ENCODE measurements at regions of chr13 and their contacts with region 1.

Region 1: DNA sequence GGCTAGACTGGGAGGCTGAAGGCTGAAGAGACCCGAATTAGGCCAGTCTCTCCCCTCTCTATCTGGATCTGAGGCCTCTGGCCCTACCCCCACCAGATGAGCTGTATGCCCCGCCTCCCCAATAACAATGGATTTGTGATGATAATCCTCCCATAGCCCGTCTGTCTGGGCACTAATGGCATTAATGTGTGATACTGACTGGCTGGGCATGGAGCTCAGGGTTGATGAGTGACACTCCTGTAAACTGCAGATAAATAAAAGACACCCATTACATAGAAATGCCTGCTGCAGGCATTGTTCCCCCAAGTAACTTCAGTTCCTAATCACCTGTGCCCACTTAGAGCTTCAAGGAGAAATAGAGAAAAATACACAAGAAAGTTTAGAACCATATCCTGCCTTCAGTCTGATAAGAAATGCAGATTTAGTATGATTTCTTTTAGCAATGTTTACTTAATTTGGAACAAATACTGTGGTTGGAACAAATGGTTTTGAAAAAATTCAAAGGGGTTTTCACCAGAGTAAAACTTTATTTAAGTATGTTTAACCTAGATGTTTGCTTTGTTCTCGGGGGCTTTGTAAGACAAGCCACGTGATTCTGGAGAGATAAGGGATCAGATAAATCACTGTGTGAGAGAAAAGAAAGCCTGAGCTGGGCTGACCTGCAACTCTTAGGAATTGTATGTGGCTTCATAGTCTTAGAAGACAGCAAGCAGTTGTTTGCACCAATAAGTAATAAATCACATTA is 60.3 kb downstream of the TNFRSF19 start:
- DNase-seq: peak; percentile 86
- ATAC-seq: peak; percentile 24
- H3K4me3 ChIP-seq: no peak overlapping the region
- H3K27ac ChIP-seq: peak overlapping the region; percentile 61
- H3K4me1 ChIP-seq: peaks cover 89% of the 10 kb centered on the region
- H3K27me3 ChIP-seq: no peaks in the 10 kb centered on the region
- CTCF ChIP-seq: no peak
- EP300 ChIP-seq: peak in 1 of 2 experiments; percentile 89; a peak in 2 of 4 replicates
- POLR2A ChIP-seq: no peak
- RAD21 ChIP-seq: no peak

Region 2: GRCh38 chr13:23531446-23531845 is 99.1 kb before region 1 on chr13:
- CTCF ChIA-PET with region 1: no interaction called
- POLR2A ChIA-PET with region 1: no interaction called
- in situ Hi-C with region 1: no loop called
- intact Hi-C with region 1: no loop called
- DNase-seq: no peak
- ATAC-seq: no peak
- H3K4me3 ChIP-seq: no peak overlapping the region
- H3K27ac ChIP-seq: no peak overlapping the region
- H3K4me1 ChIP-seq: peaks cover 9% of the 10 kb centered on the region
- H3K27me3 ChIP-seq: no peaks in the 10 kb centered on the region
- CTCF ChIP-seq: no peak
- EP300 ChIP-seq: no peak
- POLR2A ChIP-seq: no peak
- RAD21 ChIP-seq: no peak

Region 3: GRCh38 chr13:23579072-23579895 is 51.2 kb before region 1 on chr13:
- CTCF ChIA-PET with region 1: no interaction called
- POLR2A ChIA-PET with region 1: interaction called, 22 read pairs
- in situ Hi-C with region 1: no loop called
- intact Hi-C with region 1: loop called (anchors 5 kb)
- DNase-seq: peak; percentile 79
- ATAC-seq: peak; percentile 96
- H3K4me3 ChIP-seq: peak overlapping the region; percentile 65 to 93 (median 90)
- H3K27ac ChIP-seq: peak overlapping the region; percentile 77
- H3K4me1 ChIP-seq: peaks cover 75% of the 10 kb centered on the region
- H3K27me3 ChIP-seq: no peaks in the 10 kb centered on the region
- CTCF ChIP-seq: no peak
- EP300 ChIP-seq: no peak
- POLR2A ChIP-seq: peak in 1 of 2 experiments; percentile 77; a peak in 3 of 4 replicates
- RAD21 ChIP-seq: no peak; the same call in 1 of the 2 replicates

Region 4: GRCh38 chr13:23615395-23616081 is 15.0 kb before region 1 on chr13:
- CTCF ChIA-PET with region 1: no interaction called
- POLR2A ChIA-PET with region 1: interaction called, 43 read pairs
- in situ Hi-C with region 1: no loop called
- intact Hi-C with region 1: loop called (anchors 2 kb)
- DNase-seq: peak; percentile 96
- ATAC-seq: peak; percentile 99
- H3K4me3 ChIP-seq: peak overlapping the region in 2 of 3 experiments; percentile 20 to 28; a peak in 3 of 6 replicates
- H3K27ac ChIP-seq: peak overlapping the region; percentile 86
- H3K4me1 ChIP-seq: peaks cover 100% of the 10 kb centered on the region
- H3K27me3 ChIP-seq: no peaks in the 10 kb centered on the region
- CTCF ChIP-seq: no peak
- EP300 ChIP-seq: peak; percentile 56 to 94; a peak in 3 of 4 replicates
- POLR2A ChIP-seq: no peak
- RAD21 ChIP-seq: 0 out of 2 replicates have a peak, but pooled peaks have one; percentile 29

Measured in HepG2 (cell line).